ENCODE measurements at regions of chr10 and their contacts with region 1.

Region 1: DNA sequence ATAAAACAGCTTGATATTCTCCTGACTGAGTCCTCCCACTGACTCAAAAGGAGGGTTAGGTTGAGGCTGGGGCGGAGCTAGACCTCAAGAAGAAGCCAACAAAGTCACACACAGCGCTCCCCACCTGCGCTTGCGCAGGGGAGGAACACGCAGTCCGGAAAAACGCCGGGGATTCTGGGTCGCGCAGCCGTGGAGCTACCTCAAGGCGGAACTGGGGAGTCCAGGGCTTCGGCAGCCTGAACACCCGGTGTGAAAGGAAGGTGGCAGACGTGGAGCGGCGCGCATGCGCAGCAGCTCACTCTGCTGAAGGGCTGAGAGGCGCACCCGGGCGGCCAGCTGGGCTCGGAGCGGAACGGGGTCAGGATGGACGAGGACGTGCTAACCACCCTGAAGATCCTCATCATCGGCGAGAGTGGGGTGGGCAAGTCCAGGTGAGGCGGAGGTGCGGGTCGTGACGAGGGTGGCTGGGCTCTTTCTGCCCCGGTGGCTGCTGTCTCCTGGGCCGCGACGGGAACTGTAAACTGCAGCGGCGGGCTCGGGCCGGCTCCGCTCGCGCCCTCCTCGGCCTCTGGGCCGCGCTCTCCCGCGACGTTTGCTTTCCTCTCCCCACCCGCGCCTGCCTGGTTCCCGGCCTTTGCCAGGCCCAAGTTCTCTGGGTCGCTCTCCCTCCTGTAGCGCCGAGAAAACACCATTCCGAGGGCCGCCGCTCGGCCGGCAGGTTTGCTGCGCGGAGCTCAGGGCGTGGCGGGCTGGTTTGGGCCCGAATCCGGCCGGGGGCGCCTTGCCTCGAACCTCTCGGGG is at the start of gene RAB18:
- DNase-seq: peak; percentile 99
- H3K4me3 ChIP-seq: peak within 1 kb of the TSS; percentile 79 to 97 (median 90)
- H3K27ac ChIP-seq: peak within 1 kb of the TSS; percentile 78
- H3K4me1 ChIP-seq: peaks cover 13% of the 10 kb centered on the region
- H3K27me3 ChIP-seq: peaks cover 11 to 13% of the 10 kb centered on the region in 2 experiments
- CTCF ChIP-seq: no peak
- POLR2A ChIP-seq: peak; percentile 95
- total RNA-seq, gene RAB18: 108 TPM in 2 replicates

Region 2: DNA sequence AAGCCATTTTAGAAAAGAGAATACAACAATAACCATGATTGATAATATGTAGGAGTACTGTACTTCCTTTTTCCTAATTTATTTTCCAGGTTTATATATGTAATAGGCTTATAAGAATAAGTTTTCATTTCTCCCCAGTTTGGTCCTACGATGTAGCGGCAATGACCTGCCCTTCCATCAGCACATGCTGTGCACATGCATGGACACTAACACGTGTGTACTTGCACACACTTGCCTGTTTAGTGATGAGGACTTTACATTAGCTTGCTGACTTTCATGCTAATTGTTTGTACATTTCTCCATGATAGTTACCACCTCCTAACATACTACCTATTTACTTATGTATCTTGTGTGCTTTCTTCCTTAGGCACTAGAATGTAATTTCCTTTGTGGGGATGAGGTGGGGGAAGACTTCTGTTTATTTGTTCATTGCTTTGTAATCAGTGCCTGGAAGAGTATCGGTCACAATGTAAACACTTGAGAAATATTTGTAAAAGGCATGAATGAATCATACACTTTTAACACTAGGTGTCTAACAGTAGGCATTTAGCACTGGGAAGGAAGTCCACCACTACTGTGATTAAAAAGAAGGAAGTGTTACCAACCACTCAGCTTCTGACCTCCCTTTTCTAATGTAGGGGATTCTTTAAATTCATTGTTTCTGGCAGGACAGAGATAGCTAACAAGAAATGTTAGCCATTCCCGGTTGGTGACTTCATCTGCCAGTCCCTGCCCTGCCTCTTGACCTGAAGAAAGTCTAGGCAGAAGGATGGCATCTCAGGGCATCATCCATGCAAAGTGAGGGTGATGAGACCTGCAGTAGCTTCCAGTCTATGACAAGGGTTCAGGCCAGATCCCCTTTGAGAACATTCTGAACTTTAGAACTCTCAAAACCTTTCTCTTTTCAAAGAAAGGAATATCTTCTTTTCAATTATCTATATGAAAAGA is 120.3 kb before region 1 on chr10:
- CTCF ChIA-PET with region 1: no interaction called
- POLR2A ChIA-PET with region 1: no interaction called
- dilution Hi-C with region 1: no loop called
- intact Hi-C with region 1: loop called (anchors 5 kb)
- DNase-seq: peak; percentile 59
- H3K4me3 ChIP-seq: no peak overlapping the region
- H3K27ac ChIP-seq: no peak overlapping the region
- H3K4me1 ChIP-seq: peaks cover 8% of the 10 kb centered on the region
- H3K27me3 ChIP-seq: no peaks in the 10 kb centered on the region
- CTCF ChIP-seq: no peak
- POLR2A ChIP-seq: no peak

Region 3: GRCh38 chr10:27518261-27518660 is 14.1 kb after region 1 on chr10:
- CTCF ChIA-PET with region 1: interaction called, 3 read pairs
- POLR2A ChIA-PET with region 1: no interaction called
- dilution Hi-C with region 1: no loop called
- intact Hi-C with region 1: loop called (anchors 2 kb)
- DNase-seq: no peak
- H3K4me3 ChIP-seq: no peak overlapping the region
- H3K27ac ChIP-seq: no peak overlapping the region
- H3K4me1 ChIP-seq: no peaks in the 10 kb centered on the region
- H3K27me3 ChIP-seq: no peaks in the 10 kb centered on the region
- CTCF ChIP-seq: no peak
- POLR2A ChIP-seq: no peak

Region 4: DNA sequence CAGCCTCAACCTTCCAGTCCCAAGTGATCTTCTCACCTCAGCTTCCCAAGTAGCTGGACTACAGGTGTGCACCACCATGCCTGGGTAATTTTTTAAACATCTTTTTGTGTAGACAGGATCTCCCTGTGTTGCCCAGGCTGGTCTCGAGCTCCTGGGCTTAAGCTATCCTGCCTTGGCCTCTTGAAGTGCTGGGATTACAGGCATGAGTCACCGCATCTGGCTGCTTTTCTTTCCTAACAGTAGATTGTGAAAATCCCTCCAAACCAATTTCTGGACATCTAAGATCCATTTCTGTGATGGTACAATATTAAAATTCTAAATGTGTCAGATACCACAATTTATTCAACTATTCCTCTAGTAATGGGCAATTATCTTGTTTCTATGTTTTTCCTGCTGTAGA is 38.6 kb after region 1 on chr10:
- CTCF ChIA-PET with region 1: no interaction called
- POLR2A ChIA-PET with region 1: no interaction called
- dilution Hi-C with region 1: no loop called
- intact Hi-C with region 1: loop called (anchors 5 kb)
- DNase-seq: no peak
- H3K4me3 ChIP-seq: no peak overlapping the region
- H3K27ac ChIP-seq: no peak overlapping the region
- H3K4me1 ChIP-seq: no peaks in the 10 kb centered on the region
- H3K27me3 ChIP-seq: no peaks in the 10 kb centered on the region
- CTCF ChIP-seq: no peak
- POLR2A ChIP-seq: no peak

Region 5: DNA sequence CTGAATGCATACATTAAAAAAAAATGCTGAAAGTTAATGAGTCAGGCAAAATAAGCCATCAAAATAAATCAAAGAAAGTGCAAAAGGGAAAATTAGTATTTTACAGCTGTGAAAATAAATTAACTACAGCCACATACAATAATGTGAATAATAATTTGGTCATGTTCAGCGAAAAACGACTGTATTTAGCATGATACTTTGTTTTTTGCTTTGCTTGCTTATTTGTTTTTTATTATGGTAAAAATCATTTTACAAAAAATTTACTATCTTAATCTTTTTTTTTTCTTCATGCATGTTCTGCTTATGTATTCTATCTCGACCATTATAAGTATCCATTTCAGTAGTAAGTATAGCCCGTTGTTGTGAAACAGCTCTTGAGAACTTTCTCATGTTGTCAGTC is 77.0 kb after region 1 on chr10:
- CTCF ChIA-PET with region 1: no interaction called
- POLR2A ChIA-PET with region 1: no interaction called
- dilution Hi-C with region 1: no loop called
- intact Hi-C with region 1: no loop called
- DNase-seq: no peak
- H3K4me3 ChIP-seq: no peak overlapping the region
- H3K27ac ChIP-seq: no peak overlapping the region
- H3K4me1 ChIP-seq: no peaks in the 10 kb centered on the region
- H3K27me3 ChIP-seq: no peaks in the 10 kb centered on the region
- CTCF ChIP-seq: no peak
- POLR2A ChIP-seq: no peak

Region 6: GRCh38 chr10:28302638-28303488 is 798.7 kb after region 1 on chr10 and contains the start of gene MPP7:
- CTCF ChIA-PET with region 1: no interaction called
- POLR2A ChIA-PET with region 1: no interaction called
- dilution Hi-C with region 1: no loop called
- intact Hi-C with region 1: loop called (anchors 1 kb)
- DNase-seq: peak; percentile 98
- H3K4me3 ChIP-seq: peak within 1 kb of the TSS; percentile 56 to 78 (median 63)
- H3K27ac ChIP-seq: no peak within 1 kb of the TSS
- H3K4me1 ChIP-seq: peaks cover 6% of the 10 kb centered on the region
- H3K27me3 ChIP-seq: peaks cover 23 to 41% of the 10 kb centered on the region in 2 experiments
- CTCF ChIP-seq: no peak
- POLR2A ChIP-seq: no peak
- total RNA-seq, gene MPP7: 0.73 and 1.0 TPM in 2 replicates

Measured in endothelial cell of umbilical vein (primary cell).